ENCODE measurements at regions of chr10 and their contacts with region 1.

Region 1: DNA sequence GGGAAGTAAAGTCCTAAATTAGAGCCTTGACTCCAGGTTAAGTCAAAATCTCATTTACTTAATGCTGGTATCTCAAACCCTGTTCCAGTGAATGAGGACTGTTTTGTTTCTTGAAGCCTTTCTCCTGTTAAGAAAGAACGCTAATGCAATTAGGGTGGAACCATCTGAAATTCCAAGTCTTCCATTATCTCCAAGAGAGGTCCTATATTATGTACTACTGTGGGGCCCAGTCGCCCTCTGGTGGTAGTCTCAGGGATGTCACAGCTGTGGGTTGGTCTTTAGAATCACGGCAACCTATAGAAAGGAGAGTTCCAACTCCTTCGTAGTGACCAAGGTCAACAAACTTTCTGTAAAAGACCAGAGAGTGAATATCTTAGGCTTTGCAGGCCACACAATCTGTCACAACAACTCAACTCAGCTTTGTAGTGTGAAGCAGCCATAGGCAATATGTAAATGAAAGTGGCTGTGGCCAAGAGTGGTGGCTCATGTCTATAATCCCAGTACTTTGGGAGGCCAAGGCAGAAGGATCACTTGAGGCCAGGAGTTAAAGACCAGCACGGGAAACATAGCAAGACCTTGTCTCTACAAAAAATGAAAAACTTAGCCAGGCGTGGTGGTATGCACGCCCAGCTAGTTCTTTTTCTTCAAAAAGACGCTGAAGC is 9.3 kb downstream of the RPP38 start:
- DNase-seq: peak; percentile 71
- H3K4me3 ChIP-seq: peak overlapping the region in 1 of 2 experiments; percentile 16; a peak in 1 of 4 replicates
- H3K27ac ChIP-seq: peak overlapping the region in 1 of 2 experiments; percentile 11; a peak in 1 of 4 replicates
- H3K4me1 ChIP-seq: no peaks in the 10 kb centered on the region
- H3K27me3 ChIP-seq: no peaks in the 10 kb centered on the region
- CTCF ChIP-seq: peak; percentile 94
- EP300 ChIP-seq: no peak
- RAD21 ChIP-seq: peak; percentile 81

Region 2: DNA sequence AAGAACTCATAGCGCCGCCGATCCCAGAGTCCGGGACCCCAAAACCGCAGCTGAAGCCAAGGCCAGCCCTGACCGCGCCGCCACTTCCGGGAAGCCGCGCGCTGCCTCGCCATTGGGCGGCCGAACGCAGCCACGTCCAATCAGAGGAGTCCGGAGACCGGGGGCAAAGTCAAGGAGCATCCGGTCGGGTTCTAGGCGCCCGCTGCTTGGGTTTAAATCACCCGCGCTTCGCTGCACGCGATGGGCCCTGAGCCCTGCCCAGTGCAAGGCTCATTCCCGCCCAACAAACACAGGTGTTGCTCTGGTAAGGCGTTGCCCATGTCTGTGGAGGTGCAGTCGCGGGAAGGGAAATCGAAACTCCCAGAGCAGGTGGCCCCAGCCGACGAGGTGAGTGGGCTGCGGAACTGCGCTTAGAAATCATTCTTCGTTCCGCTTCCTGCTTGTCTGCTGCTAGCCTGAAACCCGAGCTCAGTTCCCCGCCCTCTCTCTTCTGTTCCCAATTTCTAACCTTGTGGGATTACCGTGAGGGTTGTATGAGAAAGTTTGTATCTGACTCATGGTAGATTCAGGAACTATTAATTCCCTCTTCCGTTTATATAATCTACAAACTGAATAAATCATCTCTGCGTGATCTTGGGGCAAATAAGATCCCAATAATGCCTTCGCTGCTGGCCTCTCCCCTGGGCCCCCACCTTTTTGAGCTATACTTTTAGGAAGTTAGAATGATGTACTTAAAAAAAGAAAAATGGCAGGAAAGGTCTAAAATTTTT is 152.3 kb before region 1 on chr10 and contains the start of gene DCLRE1C:
- CTCF ChIA-PET with region 1: interaction called, 12 read pairs
- POLR2A ChIA-PET with region 1: no interaction called
- DNase-seq: peak; percentile 95
- H3K4me3 ChIP-seq: peak within 1 kb of the TSS; percentile 72 to 90
- H3K27ac ChIP-seq: peak within 1 kb of the TSS; percentile 79 to 90
- H3K4me1 ChIP-seq: peaks cover 7 to 10% of the 10 kb centered on the region in 2 experiments; a peak in 2 of 4 replicates
- H3K27me3 ChIP-seq: no peaks in the 10 kb centered on the region
- CTCF ChIP-seq: no peak
- EP300 ChIP-seq: no peak
- RAD21 ChIP-seq: no peak
- polyA plus RNA-seq, gene DCLRE1C: 2.5 and 3.0 TPM in 2 replicates

Region 3: DNA sequence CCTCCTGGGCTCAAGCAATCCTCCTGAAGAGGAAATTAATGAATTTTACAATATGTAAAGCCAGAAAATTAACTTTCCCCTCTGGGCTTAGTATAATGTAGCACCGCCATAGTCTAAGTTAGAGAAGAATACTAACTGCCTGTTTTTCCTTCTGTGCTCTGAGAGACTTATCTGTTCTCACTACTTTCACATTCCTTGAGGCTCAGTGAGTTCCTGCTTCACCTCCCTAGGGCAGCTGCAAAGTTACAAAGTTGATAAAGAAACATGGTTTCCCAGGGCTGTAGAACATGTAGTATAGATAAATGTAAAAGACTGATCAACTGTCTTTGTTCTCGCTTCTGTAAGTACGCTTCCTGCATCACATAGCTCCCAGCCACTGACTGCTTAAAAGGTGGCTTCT is 78.7 kb before region 1 on chr10:
- CTCF ChIA-PET with region 1: no interaction called
- POLR2A ChIA-PET with region 1: no interaction called
- DNase-seq: no peak
- H3K4me3 ChIP-seq: no peak overlapping the region
- H3K27ac ChIP-seq: no peak overlapping the region
- H3K4me1 ChIP-seq: no peaks in the 10 kb centered on the region
- H3K27me3 ChIP-seq: no peaks in the 10 kb centered on the region
- CTCF ChIP-seq: no peak
- EP300 ChIP-seq: no peak
- RAD21 ChIP-seq: no peak